ENCODE measurements at regions of chr3 and their contacts with region 1.

Region 1: GRCh38 chr3:59857589-59858346 is 807.9 kb upstream of the CFAP20DC start:
- DNase-seq: peak; percentile 61 to 91
- ATAC-seq: peak; percentile 99

Region 2: DNA sequence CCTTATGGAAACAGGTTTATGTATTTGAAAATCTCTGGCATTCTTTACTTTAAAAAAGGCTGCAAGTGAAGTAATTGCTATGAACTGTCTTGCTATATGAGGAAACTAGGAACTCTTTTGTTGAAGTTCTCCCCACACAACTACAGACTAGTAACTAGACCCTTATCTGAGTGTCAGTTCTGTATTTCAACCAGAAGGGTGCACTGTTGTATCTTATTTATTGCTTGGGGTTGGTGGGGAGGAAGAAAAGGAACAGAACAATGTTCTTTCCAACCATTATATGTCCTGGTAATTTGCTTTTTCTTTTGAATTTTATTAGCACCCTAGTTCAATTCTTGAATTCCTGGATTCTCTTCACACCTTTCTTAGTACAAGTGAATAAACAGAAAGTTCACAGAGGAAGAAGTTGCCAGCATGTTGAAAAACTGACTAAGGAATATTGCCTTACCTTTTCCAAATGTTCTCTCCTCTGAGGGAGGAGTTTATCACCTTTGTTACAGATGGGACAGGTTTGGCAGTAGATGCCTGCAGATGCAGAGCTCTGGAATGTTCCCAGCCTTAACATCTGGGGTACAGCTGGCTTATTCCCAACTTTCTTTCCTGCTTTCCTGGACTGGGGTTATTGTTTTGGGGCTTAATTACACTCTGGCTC is 645.5 kb before region 1 on chr3:
- intact Hi-C with region 1: loop called in 1 of 2 experiments (anchors 10 kb)
- DNase-seq: no peak
- ATAC-seq: peak; percentile 78

Region 3: DNA sequence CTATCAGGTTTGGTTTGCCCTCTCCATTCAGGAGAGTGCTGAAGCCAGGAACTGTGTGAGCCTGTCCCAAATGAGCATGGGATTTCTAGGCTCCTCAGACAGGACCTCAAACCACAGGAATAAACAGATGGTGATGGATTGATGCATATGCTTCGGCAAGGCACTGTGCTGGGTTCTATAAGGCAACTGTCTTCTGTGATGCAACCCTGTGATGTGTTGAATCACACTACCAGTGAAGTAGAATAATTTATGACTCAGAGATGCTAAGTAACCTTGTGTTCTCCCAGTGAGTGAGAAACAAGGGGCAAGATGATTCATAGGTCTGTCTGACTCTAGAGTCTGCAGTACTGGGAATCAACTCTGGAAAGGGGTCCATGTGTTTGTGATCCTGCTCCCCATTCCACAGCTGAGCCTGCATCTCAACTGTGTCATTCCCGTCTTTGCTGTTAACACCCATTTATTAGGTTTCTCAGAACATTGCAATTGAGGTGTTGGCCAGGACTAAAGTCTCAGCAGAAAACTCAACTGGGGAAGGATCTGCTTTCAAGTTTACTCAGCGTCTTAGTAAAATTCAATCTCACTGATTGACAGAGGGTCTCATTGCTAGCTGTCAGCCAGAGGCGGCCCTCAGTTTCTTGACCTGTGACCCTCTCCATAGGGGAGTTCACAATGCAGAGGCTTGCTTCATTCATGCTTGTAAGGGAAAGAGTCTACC is 297.9 kb before region 1 on chr3:
- intact Hi-C with region 1: no loop called
- DNase-seq: no peak
- ATAC-seq: no peak

Region 4: DNA sequence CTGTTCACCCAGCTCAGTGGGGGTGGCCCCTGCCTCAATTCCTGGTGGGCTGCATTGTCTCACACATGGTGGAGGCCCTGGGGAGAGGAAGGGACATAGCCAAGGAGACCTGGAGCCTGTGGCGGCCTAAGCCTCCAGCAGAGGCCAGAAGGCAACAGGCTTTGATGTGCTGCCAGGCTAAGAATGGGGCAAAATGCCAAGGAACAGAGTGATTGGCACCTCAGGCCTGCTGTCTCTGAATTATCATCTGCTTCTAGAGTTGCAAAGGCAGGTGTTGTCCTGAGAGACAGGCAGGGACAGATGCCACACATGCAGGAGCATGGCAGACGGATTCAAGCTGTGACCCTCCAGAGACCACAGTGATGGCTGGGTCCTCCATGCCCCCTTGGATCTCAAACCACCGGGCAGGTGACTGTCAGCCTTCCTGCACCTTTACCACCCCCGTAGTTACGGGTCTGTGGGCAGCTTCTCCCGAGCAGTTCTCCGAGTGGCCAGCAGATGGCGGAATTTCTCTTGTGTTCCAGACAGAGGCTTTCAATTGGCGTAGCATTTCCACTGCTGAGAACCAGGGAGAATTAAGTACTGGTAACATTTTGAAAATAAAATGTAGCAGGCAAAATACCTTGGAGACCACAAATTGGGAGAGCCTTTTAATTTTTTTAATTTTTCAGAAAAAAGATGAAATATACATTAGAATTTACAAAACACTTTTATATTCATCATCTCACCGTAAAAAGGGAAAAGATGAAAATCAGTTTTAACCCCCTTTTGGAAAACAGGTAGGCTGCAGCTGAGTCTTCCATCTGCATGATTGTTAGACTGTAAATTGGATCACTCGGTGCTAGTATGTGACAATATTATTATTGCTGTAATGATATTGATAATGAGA is 282.4 kb before region 1 on chr3:
- intact Hi-C with region 1: loop called in 1 of 2 experiments (anchors 5 kb)
- DNase-seq: peak; percentile 71 to 91
- ATAC-seq: peak; percentile 91

Region 5: GRCh38 chr3:59698091-59698490 is 159.7 kb before region 1 on chr3:
- intact Hi-C with region 1: no loop called
- DNase-seq: no peak
- ATAC-seq: no peak

Region 6: GRCh38 chr3:60154011-60154410 is 296.2 kb after region 1 on chr3:
- intact Hi-C with region 1: no loop called
- DNase-seq: no peak
- ATAC-seq: no peak